Caco-2 (cell line): ENCODE measurements at regions of chr10 and their contacts with region 1.

Region 1: GRCh38 chr10:3785257-3785850 is 345 bp upstream of the KLF6 start:
- DNase-seq: peak; percentile 99 to 100
- H3K4me3 ChIP-seq: peak overlapping the region; percentile 96
- H3K4me3 Mint-ChIP-seq: peak overlapping the region; percentile 91
- H3K27ac Mint-ChIP-seq: peak overlapping the region; percentile 98
- H3K4me1 ChIP-seq: peaks cover 47% of the 10 kb centered on the region
- H3K4me1 Mint-ChIP-seq: peaks cover 35% of the 10 kb centered on the region
- H3K27me3 ChIP-seq: no peaks in the 10 kb centered on the region
- H3K27me3 Mint-ChIP-seq: no peaks in the 10 kb centered on the region
- CTCF ChIP-seq: no peak

Region 2: DNA sequence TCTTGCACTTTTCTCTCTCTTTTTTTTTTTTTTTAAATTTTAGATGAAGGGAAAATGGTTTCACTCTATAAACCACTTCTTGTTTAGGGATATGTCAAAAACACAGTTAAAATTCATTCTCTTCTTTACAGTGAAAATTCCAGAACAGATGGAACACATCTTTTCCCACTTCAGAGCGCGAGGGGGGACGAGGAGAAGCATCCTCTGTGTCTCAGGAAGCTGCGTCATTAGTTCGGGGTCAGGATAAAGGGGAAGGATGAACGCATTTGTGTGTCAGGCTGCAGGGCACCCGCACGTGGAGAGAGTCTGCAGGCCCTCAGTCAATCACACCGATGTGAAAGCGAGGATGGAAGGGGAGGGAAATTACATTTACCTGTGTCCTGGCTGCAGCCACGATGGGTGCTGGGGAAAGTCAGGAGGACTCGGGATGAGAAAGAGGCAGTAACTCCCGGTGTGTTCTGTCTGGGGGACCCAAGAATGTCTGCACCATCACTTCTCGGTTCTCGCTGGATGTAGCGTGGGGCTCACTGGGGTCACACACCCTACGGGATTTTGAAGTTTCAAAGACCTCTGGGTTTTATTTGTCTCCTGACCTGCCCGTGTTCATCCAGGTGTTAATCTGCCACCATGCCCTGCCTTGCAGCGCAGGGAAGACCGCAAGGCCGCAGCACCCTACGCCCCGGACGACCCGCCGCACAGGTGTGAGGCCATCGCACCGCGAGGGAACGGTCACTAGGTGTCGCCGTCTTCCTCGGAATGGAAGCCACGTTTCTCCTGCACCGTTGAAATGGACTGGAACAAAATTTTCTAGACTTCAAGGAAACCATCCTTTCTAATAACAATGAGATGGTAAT is 546.1 kb before region 1 on chr10:
- CTCF ChIA-PET with region 1: no interaction called
- POLR2A ChIA-PET with region 1: no interaction called
- intact Hi-C with region 1: loop called (anchors 1 kb)
- DNase-seq: peak; percentile 75 to 86
- H3K4me3 ChIP-seq: no peak overlapping the region
- H3K4me3 Mint-ChIP-seq: no peak overlapping the region
- H3K27ac Mint-ChIP-seq: no peak overlapping the region
- H3K4me1 ChIP-seq: no peaks in the 10 kb centered on the region
- H3K4me1 Mint-ChIP-seq: no peaks in the 10 kb centered on the region
- H3K27me3 ChIP-seq: no peaks in the 10 kb centered on the region
- H3K27me3 Mint-ChIP-seq: peaks cover 6% of the 10 kb centered on the region
- CTCF ChIP-seq: peak; percentile 96 to 99

Region 3: GRCh38 chr10:3398825-3399646 is 386.3 kb before region 1 on chr10:
- CTCF ChIA-PET with region 1: no interaction called
- POLR2A ChIA-PET with region 1: no interaction called
- intact Hi-C with region 1: no loop called
- DNase-seq: no peak
- H3K4me3 ChIP-seq: no peak overlapping the region
- H3K4me3 Mint-ChIP-seq: no peak overlapping the region
- H3K27ac Mint-ChIP-seq: no peak overlapping the region
- H3K4me1 ChIP-seq: no peaks in the 10 kb centered on the region
- H3K4me1 Mint-ChIP-seq: no peaks in the 10 kb centered on the region
- H3K27me3 ChIP-seq: no peaks in the 10 kb centered on the region
- H3K27me3 Mint-ChIP-seq: no peaks in the 10 kb centered on the region
- CTCF ChIP-seq: no peak

Region 4: DNA sequence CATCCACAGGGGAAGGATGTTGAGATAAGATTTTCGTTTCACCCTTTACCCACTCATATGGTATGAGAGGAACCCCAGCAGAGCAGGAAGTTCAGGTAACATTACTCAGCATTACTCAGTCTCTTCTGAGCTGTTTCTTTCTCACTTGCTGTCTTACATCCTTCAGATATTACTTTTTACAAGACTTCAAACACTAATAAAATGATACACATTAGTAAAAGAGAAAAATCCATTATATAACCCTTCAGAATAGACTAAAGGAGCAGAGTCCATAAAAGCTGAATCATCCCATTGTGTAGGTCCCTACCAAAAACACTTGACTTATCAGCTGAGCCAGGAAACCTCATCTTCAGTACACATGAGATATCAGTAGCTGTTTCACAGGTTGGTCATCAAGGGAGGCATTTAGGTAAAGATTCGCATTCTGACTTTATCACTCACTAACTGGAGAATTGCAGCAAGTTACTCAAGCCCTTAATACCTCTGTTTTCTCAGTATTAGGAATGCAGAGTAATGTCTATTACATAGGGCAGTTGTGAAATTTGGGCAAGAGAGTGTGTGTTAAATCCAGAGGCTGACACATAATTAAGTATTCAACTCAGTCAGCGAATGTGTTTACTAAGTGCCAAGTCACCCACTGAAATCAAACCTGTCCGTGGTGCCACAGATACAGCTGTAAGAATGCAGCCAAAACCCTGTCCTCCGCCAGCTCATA is 45.0 kb before region 1 on chr10:
- CTCF ChIA-PET with region 1: interaction called, 8 read pairs
- POLR2A ChIA-PET with region 1: interaction called, 16 read pairs
- intact Hi-C with region 1: loop called (anchors 1 kb)
- DNase-seq: peak; percentile 77 to 81
- H3K4me3 ChIP-seq: no peak overlapping the region
- H3K4me3 Mint-ChIP-seq: peak overlapping the region; percentile 44
- H3K27ac Mint-ChIP-seq: peak overlapping the region; percentile 77
- H3K4me1 ChIP-seq: peaks cover 47% of the 10 kb centered on the region
- H3K4me1 Mint-ChIP-seq: peaks cover 47% of the 10 kb centered on the region
- H3K27me3 ChIP-seq: no peaks in the 10 kb centered on the region
- H3K27me3 Mint-ChIP-seq: no peaks in the 10 kb centered on the region
- CTCF ChIP-seq: no peak

Region 5: GRCh38 chr10:3761021-3761686 is 24.2 kb before region 1 on chr10:
- CTCF ChIA-PET with region 1: no interaction called
- POLR2A ChIA-PET with region 1: interaction called, 77 read pairs
- intact Hi-C with region 1: loop called (anchors 1 kb)
- DNase-seq: no peak
- H3K4me3 ChIP-seq: no peak overlapping the region
- H3K4me3 Mint-ChIP-seq: peak overlapping the region; percentile 86
- H3K27ac Mint-ChIP-seq: peak overlapping the region; percentile 78
- H3K4me1 ChIP-seq: peaks cover 94% of the 10 kb centered on the region
- H3K4me1 Mint-ChIP-seq: peaks cover 80% of the 10 kb centered on the region
- H3K27me3 ChIP-seq: no peaks in the 10 kb centered on the region
- H3K27me3 Mint-ChIP-seq: no peaks in the 10 kb centered on the region
- CTCF ChIP-seq: no peak

Region 6: GRCh38 chr10:3828404-3829155 is 43.2 kb after region 1 on chr10:
- CTCF ChIA-PET with region 1: interaction called, 6 read pairs
- POLR2A ChIA-PET with region 1: interaction called, 12 read pairs
- intact Hi-C with region 1: loop called (anchors 1 kb)
- DNase-seq: no peak
- H3K4me3 ChIP-seq: no peak overlapping the region
- H3K4me3 Mint-ChIP-seq: peak overlapping the region; percentile 53
- H3K27ac Mint-ChIP-seq: peak overlapping the region; percentile 94
- H3K4me1 ChIP-seq: peaks cover 84% of the 10 kb centered on the region
- H3K4me1 Mint-ChIP-seq: peaks cover 70% of the 10 kb centered on the region
- H3K27me3 ChIP-seq: no peaks in the 10 kb centered on the region
- H3K27me3 Mint-ChIP-seq: no peaks in the 10 kb centered on the region
- CTCF ChIP-seq: no peak